Gastrocnemius medialis (tissue), 4 donors: ENCODE measurements at regions of chr13 and their contacts with region 1.

Region 1: GRCh38 chr13:109918179-109918711 is 131.9 kb upstream of the IRS2 start:
- DNase-seq: peak; percentile 84 to 92
- ATAC-seq: peak; percentile 99
- H3K4me3 ChIP-seq: no peak overlapping the region
- H3K27ac ChIP-seq: peak overlapping the region; percentile 73 to 81 (median 77)
- H3K4me1 ChIP-seq: peaks cover 4 to 11% of the 10 kb centered on the region in 2 donors
- H3K27me3 ChIP-seq: no peaks in the 10 kb centered on the region
- CTCF ChIP-seq: peak in 1 of 5 experiments; percentile 14
- POLR2A ChIP-seq: peak in 1 of 2 donors; percentile 21

Region 2: GRCh38 chr13:109859216-109859835 is 58.9 kb before region 1 on chr13:
- in situ Hi-C with region 1: no loop called
- intact Hi-C with region 1: loop called (anchors 1 kb)
- DNase-seq: peak; percentile 84
- ATAC-seq: peak; percentile 98 to 99
- H3K4me3 ChIP-seq: no peak overlapping the region
- H3K27ac ChIP-seq: peak overlapping the region; percentile 56 to 83 (median 74)
- H3K4me1 ChIP-seq: peaks cover 10 to 13% of the 10 kb centered on the region in 2 donors
- H3K27me3 ChIP-seq: no peaks in the 10 kb centered on the region
- CTCF ChIP-seq: no peak
- POLR2A ChIP-seq: peak in 1 of 2 donors; percentile 52

Region 3: GRCh38 chr13:109869312-109870237 is 48.7 kb before region 1 on chr13:
- in situ Hi-C with region 1: no loop called
- intact Hi-C with region 1: loop called (anchors 5 kb)
- DNase-seq: peak in 1 of 2 donors; percentile 80
- ATAC-seq: peak; percentile 30 to 88
- H3K4me3 ChIP-seq: peak overlapping the region; percentile 30 to 59 (median 40)
- H3K27ac ChIP-seq: peak overlapping the region in 1 of 4 donors; percentile 42
- H3K4me1 ChIP-seq: peaks cover 9 to 15% of the 10 kb centered on the region in 2 donors
- H3K27me3 ChIP-seq: no peaks in the 10 kb centered on the region
- CTCF ChIP-seq: peak in 1 of 5 experiments; percentile 16
- POLR2A ChIP-seq: no peak

Region 4: DNA sequence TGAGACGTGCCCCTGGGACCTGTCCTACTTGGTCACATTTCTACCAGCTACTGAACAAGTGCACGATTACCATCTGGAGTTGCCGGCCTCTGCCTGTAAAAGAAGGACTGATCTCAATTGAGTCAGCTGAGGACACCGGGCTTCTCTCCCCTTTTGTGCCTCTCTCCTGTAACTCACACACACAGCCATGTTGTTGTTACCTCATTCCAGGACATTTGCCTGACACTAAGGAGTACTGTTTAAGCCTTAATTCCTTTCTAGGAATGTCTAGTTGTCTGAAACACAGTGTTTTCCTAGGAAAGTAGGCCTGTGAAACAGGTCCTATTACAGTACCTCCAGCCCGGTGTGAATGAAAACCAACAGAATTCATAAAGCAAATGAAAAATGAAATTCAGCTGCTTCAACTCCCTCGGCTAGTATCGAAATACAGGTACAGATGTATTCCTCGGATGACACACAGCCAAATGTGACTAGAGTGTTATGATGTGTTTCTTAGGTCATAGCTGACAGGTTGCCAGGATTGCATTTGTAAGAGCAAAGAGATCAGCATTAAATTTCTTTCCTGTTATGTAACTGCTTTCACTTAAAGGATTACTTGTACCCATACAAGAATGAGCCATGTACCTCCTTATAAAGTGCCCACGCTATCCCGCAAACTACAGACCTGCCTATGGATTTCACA is 20.2 kb after region 1 on chr13:
- in situ Hi-C with region 1: no loop called
- intact Hi-C with region 1: loop called (anchors 1 kb)
- DNase-seq: peak; percentile 40 to 71
- ATAC-seq: peak; percentile 95 to 98
- H3K4me3 ChIP-seq: no peak overlapping the region
- H3K27ac ChIP-seq: peak overlapping the region; percentile 65 to 81 (median 70)
- H3K4me1 ChIP-seq: peaks cover 11% of the 10 kb centered on the region in 2 donors
- H3K27me3 ChIP-seq: no peaks in the 10 kb centered on the region
- CTCF ChIP-seq: no peak
- POLR2A ChIP-seq: peak; percentile 12 to 53

Region 5: DNA sequence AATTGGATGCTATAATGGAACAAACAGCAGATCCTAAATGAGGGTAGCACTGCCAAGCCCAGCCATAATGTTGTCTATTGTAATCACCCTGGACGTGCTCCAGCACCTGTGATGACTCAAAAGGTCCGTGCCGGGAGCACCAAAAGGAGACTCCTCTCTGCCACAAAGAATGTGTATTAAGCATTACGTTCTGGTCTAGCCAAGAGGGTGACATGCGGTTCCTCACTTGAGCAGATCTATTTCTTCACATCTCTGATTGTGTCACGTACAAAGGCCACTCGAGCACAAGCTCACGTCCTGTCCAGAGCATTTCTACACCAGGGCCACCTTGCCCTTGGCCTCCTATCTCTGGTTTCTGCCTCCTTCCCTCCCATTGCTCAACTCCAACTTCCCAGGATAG is 88.1 kb after region 1 on chr13:
- in situ Hi-C with region 1: no loop called
- intact Hi-C with region 1: loop called (anchors 1 kb)
- DNase-seq: peak; percentile 51 to 71
- ATAC-seq: peak; percentile 71 to 89
- H3K4me3 ChIP-seq: no peak overlapping the region
- H3K27ac ChIP-seq: peak overlapping the region; percentile 24 to 73 (median 42)
- H3K4me1 ChIP-seq: peaks cover 0 to 4% of the 10 kb centered on the region in 2 donors
- H3K27me3 ChIP-seq: no peaks in the 10 kb centered on the region
- CTCF ChIP-seq: no peak
- POLR2A ChIP-seq: no peak

Region 6: DNA sequence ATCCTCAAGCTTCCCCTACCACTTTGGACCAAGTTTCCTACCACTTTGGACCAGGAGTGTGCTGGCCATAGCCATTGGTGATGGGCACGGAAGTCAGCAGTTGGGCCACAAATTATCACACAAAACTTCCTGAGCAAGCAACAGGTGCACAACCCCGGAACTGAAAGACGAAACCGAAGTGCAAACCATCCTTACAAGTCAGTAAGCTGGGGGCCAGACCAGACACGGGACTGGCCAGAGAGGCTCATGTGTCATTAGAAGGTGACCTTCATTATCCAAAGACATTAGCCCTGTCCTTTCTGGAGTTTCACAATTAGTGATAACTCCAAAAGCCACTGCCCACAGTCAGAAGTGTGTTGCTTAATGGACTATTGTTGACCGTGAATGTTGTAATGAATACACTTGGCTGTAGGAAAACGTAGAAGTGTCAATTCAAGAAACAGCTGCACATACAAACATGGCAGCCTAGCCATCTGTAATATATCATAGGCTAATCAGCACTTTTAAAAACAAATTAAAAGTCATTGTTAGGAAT is 112.2 kb after region 1 on chr13:
- in situ Hi-C with region 1: no loop called
- intact Hi-C with region 1: loop called (anchors 5 kb)
- DNase-seq: peak in 1 of 2 donors; percentile 60
- ATAC-seq: peak in 1 of 2 donors; percentile 90
- H3K4me3 ChIP-seq: no peak overlapping the region
- H3K27ac ChIP-seq: peak overlapping the region in 1 of 4 donors; percentile 73
- H3K4me1 ChIP-seq: no peaks in the 10 kb centered on the region
- H3K27me3 ChIP-seq: no peaks in the 10 kb centered on the region
- CTCF ChIP-seq: no peak
- POLR2A ChIP-seq: no peak